HEK293 (cell line): ENCODE measurements at regions of chr17 and their contacts with region 1.

Region 1: GRCh38 chr17:56499799-56500388 is 93.6 kb upstream of the NOG start:
- H3K4me3 ChIP-seq: no peak overlapping the region
- H3K27ac ChIP-seq: no peak overlapping the region
- H3K4me1 ChIP-seq: no peaks in the 10 kb centered on the region
- CTCF ChIP-seq: no peak

Region 2: DNA sequence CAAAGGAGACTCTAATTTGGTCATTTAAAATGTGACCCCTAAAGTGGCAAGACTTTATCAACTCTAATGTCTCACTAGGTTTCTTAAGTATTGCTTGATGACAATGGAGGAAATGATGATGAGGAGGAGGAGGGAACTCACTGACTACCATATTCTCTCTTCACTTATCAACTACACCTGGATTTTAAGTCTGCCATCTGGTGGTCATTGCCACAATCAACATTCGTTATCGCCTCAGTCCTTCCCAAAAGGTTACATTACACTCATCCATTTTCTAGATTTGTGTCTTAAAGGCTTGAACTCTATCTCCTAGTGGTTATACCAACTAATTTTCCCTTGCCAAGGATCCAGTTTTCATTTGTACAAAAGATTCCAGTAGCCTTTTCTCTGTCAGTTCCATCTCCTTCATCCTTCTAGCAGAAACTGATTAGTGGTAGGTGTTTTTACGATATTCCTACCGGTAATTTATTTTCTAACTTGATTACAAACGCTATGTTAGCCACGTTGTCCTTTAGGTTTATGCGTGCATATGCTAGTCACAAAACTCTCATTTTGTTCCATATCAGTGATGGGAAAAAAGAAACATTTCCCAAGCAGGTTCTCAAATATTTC is 21.0 kb before region 1 on chr17:
- CTCF ChIA-PET with region 1: interaction called, 11 read pairs
- POLR2A ChIA-PET with region 1: interaction called, 3 read pairs
- H3K4me3 ChIP-seq: no peak overlapping the region
- H3K27ac ChIP-seq: no peak overlapping the region
- H3K4me1 ChIP-seq: no peaks in the 10 kb centered on the region
- CTCF ChIP-seq: no peak

Region 3: DNA sequence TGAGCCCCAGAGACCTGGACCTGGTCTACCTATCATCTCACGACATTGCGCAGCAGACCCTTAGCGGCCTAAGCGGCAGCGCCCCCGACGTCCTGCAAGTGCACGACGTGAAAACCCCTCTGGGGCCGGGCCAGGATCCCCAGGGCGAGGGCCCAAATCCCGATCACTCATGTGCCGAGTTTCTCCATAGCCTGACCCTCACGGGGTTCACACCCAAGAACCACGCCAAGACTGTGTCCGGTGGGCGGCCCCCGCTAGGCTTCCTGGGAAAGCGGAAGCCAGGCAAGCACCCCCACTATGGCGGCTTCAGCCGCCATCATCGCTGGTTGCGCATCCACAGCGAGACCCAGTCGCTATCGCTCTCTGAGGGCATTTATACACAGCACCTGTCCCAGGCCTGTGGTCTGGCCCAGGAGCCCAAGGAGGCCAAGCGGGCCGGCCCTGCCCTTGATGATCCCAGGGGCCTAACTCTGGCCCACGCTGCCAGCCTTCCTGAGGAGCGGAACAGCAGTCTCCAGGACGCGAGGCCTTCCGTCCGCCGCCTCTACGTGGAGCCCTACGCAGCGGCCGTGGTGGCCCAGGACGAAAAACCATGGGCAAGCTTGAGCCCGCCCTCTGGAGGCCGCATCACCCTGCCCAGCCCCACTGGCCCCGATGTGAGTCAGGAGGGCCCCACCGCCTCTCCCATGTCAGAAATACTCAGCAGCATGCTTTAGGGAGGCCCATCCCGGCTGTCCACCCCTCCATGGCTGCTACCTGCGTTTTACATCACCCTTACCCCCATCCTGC is 10.9 kb after region 1 on chr17:
- CTCF ChIA-PET with region 1: interaction called, 47 read pairs
- POLR2A ChIA-PET with region 1: no interaction called
- H3K4me3 ChIP-seq: no peak overlapping the region
- H3K27ac ChIP-seq: no peak overlapping the region
- H3K4me1 ChIP-seq: no peaks in the 10 kb centered on the region
- CTCF ChIP-seq: no peak

Region 4: DNA sequence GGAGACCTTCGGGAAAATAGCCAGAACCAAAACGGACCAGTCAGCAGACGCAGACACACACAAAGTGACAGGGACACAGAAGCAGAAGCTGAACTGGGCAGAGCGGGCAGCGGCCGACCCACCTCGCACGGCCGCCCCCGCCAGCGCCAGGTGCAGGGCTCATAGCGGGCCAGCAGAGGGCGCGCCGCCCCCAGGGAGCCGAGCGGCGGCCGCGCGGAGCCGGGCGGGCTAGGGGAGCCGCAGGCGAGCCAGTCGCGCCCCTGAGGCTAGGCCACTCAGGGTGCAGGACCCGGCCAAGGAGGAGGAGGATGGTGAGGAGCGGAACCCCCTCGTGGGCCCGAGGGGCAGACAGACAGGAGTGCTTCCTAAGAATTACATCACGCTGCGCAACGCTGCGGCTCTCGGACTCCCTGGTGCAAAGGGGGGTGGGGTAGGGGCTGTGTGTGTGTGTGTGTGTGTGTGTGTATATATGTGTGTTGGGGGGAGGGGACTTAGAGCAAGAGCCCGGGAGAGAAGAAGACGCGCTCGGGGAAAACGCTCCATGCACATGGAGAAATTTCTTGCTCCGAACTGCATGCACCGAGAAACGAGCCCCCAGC is 92.7 kb after region 1 on chr17:
- CTCF ChIA-PET with region 1: interaction called, 14 read pairs
- POLR2A ChIA-PET with region 1: no interaction called
- H3K4me3 ChIP-seq: peak overlapping the region; percentile 49
- H3K27ac ChIP-seq: peak overlapping the region; percentile 63
- H3K4me1 ChIP-seq: peaks cover 12% of the 10 kb centered on the region
- CTCF ChIP-seq: no peak; the same call in 1 of the 2 replicates

Region 5: DNA sequence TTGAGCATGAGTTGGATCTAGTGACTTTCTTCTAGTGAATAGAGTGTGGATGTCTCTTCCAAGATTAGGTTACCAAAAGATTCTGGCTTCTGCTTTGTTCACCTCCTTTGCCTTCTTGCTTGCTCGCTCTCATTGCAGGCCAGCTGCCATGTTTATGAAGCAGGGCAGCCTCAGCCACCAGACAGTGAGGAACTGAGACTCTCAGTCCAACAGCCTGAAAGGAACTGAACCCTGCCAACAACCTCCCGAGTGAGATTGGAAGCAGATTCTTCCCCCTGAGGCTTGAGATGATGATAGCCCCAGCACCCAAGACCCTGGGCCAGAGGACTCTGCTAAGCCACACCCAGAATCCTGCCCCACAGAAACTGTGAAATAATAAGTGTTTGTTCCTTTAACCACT is 142.0 kb after region 1 on chr17:
- CTCF ChIA-PET with region 1: no interaction called
- POLR2A ChIA-PET with region 1: no interaction called
- H3K4me3 ChIP-seq: no peak overlapping the region
- H3K27ac ChIP-seq: no peak overlapping the region
- H3K4me1 ChIP-seq: no peaks in the 10 kb centered on the region; the same call in 1 of the 2 replicates
- CTCF ChIP-seq: no peak

Region 6: DNA sequence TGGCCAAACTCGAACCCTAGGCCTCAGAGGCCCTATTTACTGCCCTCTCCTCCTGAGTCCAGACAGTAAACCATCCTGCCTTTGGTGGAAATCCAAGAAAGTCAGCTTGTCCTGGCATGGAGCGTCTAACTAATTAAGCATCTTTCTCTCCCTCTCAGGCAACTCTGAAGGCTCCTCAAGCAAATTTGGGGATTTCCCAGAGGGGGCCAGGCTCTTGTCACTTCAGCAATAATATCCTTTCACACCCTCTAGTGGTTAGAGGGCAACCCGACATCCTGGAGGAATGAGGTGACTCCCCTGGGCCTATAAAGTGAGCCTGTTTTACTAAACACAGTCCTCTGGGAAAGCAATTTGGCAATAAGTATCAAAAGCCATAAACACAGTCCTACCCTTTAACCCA is 154.0 kb after region 1 on chr17:
- CTCF ChIA-PET with region 1: interaction called, 17 read pairs
- POLR2A ChIA-PET with region 1: no interaction called
- H3K4me3 ChIP-seq: no peak overlapping the region
- H3K27ac ChIP-seq: no peak overlapping the region
- H3K4me1 ChIP-seq: no peaks in the 10 kb centered on the region
- CTCF ChIP-seq: peak; percentile 39; the same call in 1 of the 2 replicates

Region 7: GRCh38 chr17:56690486-56691291 is 190.8 kb after region 1 on chr17:
- CTCF ChIA-PET with region 1: no interaction called
- POLR2A ChIA-PET with region 1: interaction called, 10 read pairs
- H3K4me3 ChIP-seq: no peak overlapping the region
- H3K27ac ChIP-seq: no peak overlapping the region
- H3K4me1 ChIP-seq: no peaks in the 10 kb centered on the region
- CTCF ChIP-seq: no peak

Region 8: DNA sequence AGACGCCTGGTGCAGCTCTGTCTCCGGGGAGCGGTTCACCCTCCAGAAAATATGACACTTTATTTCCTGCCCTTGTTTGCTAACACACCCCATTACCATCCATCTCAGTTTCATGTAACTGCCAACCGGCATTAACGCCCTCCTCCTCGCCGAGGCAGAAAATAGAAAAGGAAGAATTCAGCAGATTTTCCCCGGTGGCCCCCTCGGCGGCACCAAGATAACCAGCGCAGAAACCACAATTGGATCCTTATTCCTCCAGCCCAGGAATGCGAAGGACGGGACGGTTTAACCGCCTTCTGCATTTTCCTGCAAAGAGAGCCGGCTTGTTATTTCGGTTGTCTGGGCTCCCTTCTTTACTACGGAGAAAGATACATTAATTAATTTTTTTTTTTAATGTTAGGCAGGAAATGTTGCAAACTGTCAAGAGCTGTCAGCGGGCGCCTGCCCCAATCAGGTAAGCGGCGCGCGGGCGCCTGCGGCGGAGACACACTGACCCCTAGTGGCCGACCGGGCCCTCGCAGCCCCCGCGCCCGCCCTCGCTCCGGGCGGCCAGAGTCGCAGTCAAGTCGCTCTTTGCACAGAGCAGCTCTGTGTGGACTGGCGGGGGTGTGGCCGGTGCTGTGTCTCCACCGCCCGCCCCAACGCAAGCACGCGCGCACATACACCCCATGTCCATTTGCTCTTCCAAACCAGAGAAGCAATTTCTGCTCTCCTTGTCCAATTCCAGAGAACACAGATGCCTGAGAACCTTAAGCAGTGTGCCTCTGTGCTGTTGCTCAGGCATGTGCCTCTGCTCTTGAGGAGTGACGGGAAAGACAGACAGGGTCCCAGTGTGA is 280.2 kb after region 1 on chr17:
- CTCF ChIA-PET with region 1: interaction called, 14 read pairs
- POLR2A ChIA-PET with region 1: no interaction called
- H3K4me3 ChIP-seq: peak overlapping the region; percentile 21
- H3K27ac ChIP-seq: no peak overlapping the region
- H3K4me1 ChIP-seq: no peaks in the 10 kb centered on the region; the same call in 1 of the 2 replicates
- CTCF ChIP-seq: peak; percentile 92